CD8-positive, alpha-beta T cell (primary cell): ENCODE measurements at regions of chr12 and their contacts with region 1.

Region 1: GRCh38 chr12:46577063-46577776 is 204.6 kb upstream of the SLC38A2 start:
- DNase-seq: no peak
- ATAC-seq: no peak
- H3K4me3 ChIP-seq: no peak overlapping the region
- H3K4me3 Mint-ChIP-seq: no peak overlapping the region
- H3K27ac ChIP-seq: no peak overlapping the region
- H3K27ac Mint-ChIP-seq: no peak overlapping the region
- H3K4me1 ChIP-seq: no peaks in the 10 kb centered on the region
- H3K4me1 Mint-ChIP-seq: no peaks in the 10 kb centered on the region
- H3K27me3 ChIP-seq: no peaks in the 10 kb centered on the region
- H3K27me3 Mint-ChIP-seq: no peaks in the 10 kb centered on the region
- CTCF ChIP-seq: no peak

Region 2: GRCh38 chr12:46523863-46524770 is 53.1 kb before region 1 on chr12:
- CTCF ChIA-PET with region 1: no interaction called
- POLR2A ChIA-PET with region 1: no interaction called
- intact Hi-C with region 1: loop called in 1 of 2 experiments (anchors 5 kb)
- DNase-seq: peak in 7 of 9 experiments; percentile 14 to 68 (median 35)
- ATAC-seq: peak; percentile 97
- H3K4me3 ChIP-seq: peak overlapping the region; percentile 11 to 28
- H3K4me3 Mint-ChIP-seq: peak overlapping the region; percentile 74
- H3K27ac ChIP-seq: peak overlapping the region; percentile 41 to 66
- H3K27ac Mint-ChIP-seq: peak overlapping the region; percentile 95
- H3K4me1 ChIP-seq: peaks cover 23% of the 10 kb centered on the region
- H3K4me1 Mint-ChIP-seq: peaks cover 36% of the 10 kb centered on the region
- H3K27me3 ChIP-seq: no peaks in the 10 kb centered on the region
- H3K27me3 Mint-ChIP-seq: no peaks in the 10 kb centered on the region
- CTCF ChIP-seq: no peak

Region 3: DNA sequence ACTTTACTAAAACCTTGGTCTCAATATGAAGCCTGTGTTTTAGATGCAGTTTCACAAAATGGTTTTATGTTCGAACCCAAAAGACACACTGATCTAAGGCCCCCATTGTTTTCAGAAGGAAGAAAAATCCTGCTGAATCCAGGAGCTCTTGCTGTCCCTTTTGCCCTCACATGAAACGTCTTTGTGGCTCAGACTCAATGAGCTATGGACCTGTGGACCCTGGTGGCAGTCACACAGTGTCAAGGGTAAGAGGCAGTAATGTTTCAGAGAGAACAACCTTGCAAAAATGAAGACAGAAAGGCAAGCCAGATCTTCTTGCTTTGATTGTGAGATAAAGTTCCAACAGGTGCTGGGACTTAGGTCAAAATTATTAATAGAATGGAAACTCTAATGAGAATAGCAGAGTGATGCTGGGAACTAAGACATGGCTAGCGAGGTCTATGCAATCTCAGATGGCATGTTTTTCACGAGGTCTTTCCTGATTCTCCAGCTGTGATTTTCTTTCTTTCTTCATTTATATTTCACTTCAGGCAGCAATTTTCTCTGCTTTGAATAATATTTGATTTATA is 39.7 kb before region 1 on chr12:
- CTCF ChIA-PET with region 1: no interaction called
- POLR2A ChIA-PET with region 1: no interaction called
- intact Hi-C with region 1: no loop called
- DNase-seq: no peak
- ATAC-seq: no peak
- H3K4me3 ChIP-seq: no peak overlapping the region
- H3K4me3 Mint-ChIP-seq: no peak overlapping the region
- H3K27ac ChIP-seq: no peak overlapping the region
- H3K27ac Mint-ChIP-seq: no peak overlapping the region
- H3K4me1 ChIP-seq: no peaks in the 10 kb centered on the region
- H3K4me1 Mint-ChIP-seq: no peaks in the 10 kb centered on the region
- H3K27me3 ChIP-seq: no peaks in the 10 kb centered on the region
- H3K27me3 Mint-ChIP-seq: no peaks in the 10 kb centered on the region
- CTCF ChIP-seq: no peak

Region 4: GRCh38 chr12:46811185-46811584 is 234.0 kb after region 1 on chr12:
- CTCF ChIA-PET with region 1: no interaction called
- POLR2A ChIA-PET with region 1: no interaction called
- intact Hi-C with region 1: no loop called
- DNase-seq: peak in 3 of 9 experiments; percentile 10 to 31 (median 19)
- ATAC-seq: peak; percentile 31
- H3K4me3 ChIP-seq: no peak overlapping the region
- H3K4me3 Mint-ChIP-seq: no peak overlapping the region
- H3K27ac ChIP-seq: no peak overlapping the region
- H3K27ac Mint-ChIP-seq: peak overlapping the region; percentile 23
- H3K4me1 ChIP-seq: no peaks in the 10 kb centered on the region
- H3K4me1 Mint-ChIP-seq: peaks cover 8% of the 10 kb centered on the region
- H3K27me3 ChIP-seq: no peaks in the 10 kb centered on the region
- H3K27me3 Mint-ChIP-seq: peaks cover 2% of the 10 kb centered on the region
- CTCF ChIP-seq: no peak